B cell (primary cell): ENCODE measurements at regions of chr19 and their contacts with region 1.

Region 1: GRCh38 chr19:1445185-1445931 is 4.6 kb upstream of the APC2 start:
- DNase-seq: peak; percentile 86
- ATAC-seq: peak; percentile 94
- H3K4me3 ChIP-seq: peak overlapping the region in 4 of 5 experiments; percentile 36 to 69 (median 52)
- H3K4me3 Mint-ChIP-seq: peak overlapping the region; percentile 84
- H3K27ac ChIP-seq: no peak overlapping the region
- H3K27ac Mint-ChIP-seq: peak overlapping the region; percentile 20
- H3K4me1 ChIP-seq: peaks cover 19 to 29% of the 10 kb centered on the region in 2 donors
- H3K4me1 Mint-ChIP-seq: peaks cover 26% of the 10 kb centered on the region
- H3K27me3 ChIP-seq: peaks cover 0 to 42% (median 23%) of the 10 kb centered on the region in 4 experiments
- H3K27me3 Mint-ChIP-seq: peaks cover 24% of the 10 kb centered on the region
- CTCF ChIP-seq: peak; percentile 98

Region 2: DNA sequence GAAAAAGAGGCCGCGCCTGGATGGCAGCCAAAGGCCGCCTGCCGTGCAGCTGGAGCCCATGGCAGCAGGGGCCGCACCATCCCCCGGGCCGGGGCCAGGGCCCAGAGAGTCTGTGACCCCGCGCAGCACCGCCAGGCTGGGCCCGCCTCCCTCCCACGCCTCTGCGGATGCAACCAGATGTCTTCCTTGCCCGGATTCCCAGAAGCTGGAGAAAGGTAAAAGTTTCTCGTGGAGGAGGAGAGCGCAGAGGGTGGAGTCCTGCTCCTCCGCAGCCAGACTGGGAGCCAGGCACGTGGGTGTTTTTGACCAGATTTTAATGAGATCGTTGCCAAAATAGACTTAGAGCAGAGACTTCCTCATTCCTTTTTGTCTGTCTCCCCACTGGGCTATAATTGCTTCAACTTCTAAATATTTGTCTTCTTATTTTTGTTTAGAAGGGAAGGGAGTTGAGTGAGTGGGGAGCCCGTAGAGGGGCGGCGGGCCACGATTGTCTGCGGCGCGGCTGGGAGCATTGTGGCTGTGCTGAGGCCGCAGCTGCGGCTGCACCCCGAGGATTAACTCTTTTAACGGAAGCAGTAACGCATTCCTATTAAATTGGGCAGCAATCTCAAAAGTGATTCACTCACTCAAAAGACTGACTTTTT is 84.4 kb before region 1 on chr19:
- CTCF ChIA-PET with region 1: no interaction called
- POLR2A ChIA-PET with region 1: no interaction called
- intact Hi-C with region 1: no loop called
- DNase-seq: no peak
- ATAC-seq: no peak
- H3K4me3 ChIP-seq: no peak overlapping the region
- H3K4me3 Mint-ChIP-seq: no peak overlapping the region
- H3K27ac ChIP-seq: no peak overlapping the region
- H3K27ac Mint-ChIP-seq: no peak overlapping the region
- H3K4me1 ChIP-seq: peaks cover 21 to 25% of the 10 kb centered on the region in 2 donors
- H3K4me1 Mint-ChIP-seq: peaks cover 35% of the 10 kb centered on the region
- H3K27me3 ChIP-seq: no peaks in the 10 kb centered on the region
- H3K27me3 Mint-ChIP-seq: no peaks in the 10 kb centered on the region
- CTCF ChIP-seq: no peak

Region 3: GRCh38 chr19:1429750-1430149 is 15.6 kb before region 1 on chr19:
- CTCF ChIA-PET with region 1: no interaction called
- POLR2A ChIA-PET with region 1: interaction called, 13 read pairs
- intact Hi-C with region 1: no loop called
- DNase-seq: no peak
- ATAC-seq: no peak
- H3K4me3 ChIP-seq: no peak overlapping the region
- H3K4me3 Mint-ChIP-seq: no peak overlapping the region
- H3K27ac ChIP-seq: no peak overlapping the region
- H3K27ac Mint-ChIP-seq: no peak overlapping the region
- H3K4me1 ChIP-seq: no peaks in the 10 kb centered on the region
- H3K4me1 Mint-ChIP-seq: no peaks in the 10 kb centered on the region
- H3K27me3 ChIP-seq: no peaks in the 10 kb centered on the region
- H3K27me3 Mint-ChIP-seq: no peaks in the 10 kb centered on the region
- CTCF ChIP-seq: no peak

Region 4: GRCh38 chr19:1455336-1456120 is 10.2 kb after region 1 on chr19:
- CTCF ChIA-PET with region 1: interaction called, 11 read pairs
- POLR2A ChIA-PET with region 1: no interaction called
- intact Hi-C with region 1: no loop called
- DNase-seq: peak; percentile 68
- ATAC-seq: peak; percentile 67
- H3K4me3 ChIP-seq: peak overlapping the region in 3 of 5 experiments; percentile 12 to 29 (median 15)
- H3K4me3 Mint-ChIP-seq: peak overlapping the region; percentile 66
- H3K27ac ChIP-seq: no peak overlapping the region
- H3K27ac Mint-ChIP-seq: no peak overlapping the region
- H3K4me1 ChIP-seq: peaks cover 33 to 35% of the 10 kb centered on the region in 2 donors
- H3K4me1 Mint-ChIP-seq: peaks cover 21% of the 10 kb centered on the region
- H3K27me3 ChIP-seq: peaks cover 0 to 69% (median 41%) of the 10 kb centered on the region in 4 experiments
- H3K27me3 Mint-ChIP-seq: peaks cover 34% of the 10 kb centered on the region
- CTCF ChIP-seq: no peak

Region 5: GRCh38 chr19:1470203-1471009 is 25.0 kb after region 1 on chr19:
- CTCF ChIA-PET with region 1: interaction called, 11 read pairs
- POLR2A ChIA-PET with region 1: interaction called, 4 read pairs
- intact Hi-C with region 1: no loop called
- DNase-seq: peak; percentile 76
- ATAC-seq: peak; percentile 75
- H3K4me3 ChIP-seq: peak overlapping the region in 4 of 5 experiments; percentile 32 to 55 (median 53)
- H3K4me3 Mint-ChIP-seq: peak overlapping the region; percentile 80
- H3K27ac ChIP-seq: no peak overlapping the region
- H3K27ac Mint-ChIP-seq: peak overlapping the region; percentile 63
- H3K4me1 ChIP-seq: peaks cover 54 to 64% of the 10 kb centered on the region in 2 donors
- H3K4me1 Mint-ChIP-seq: peaks cover 20% of the 10 kb centered on the region
- H3K27me3 ChIP-seq: peaks cover 0 to 56% (median 18%) of the 10 kb centered on the region in 4 experiments
- H3K27me3 Mint-ChIP-seq: peaks cover 3% of the 10 kb centered on the region
- CTCF ChIP-seq: no peak

Region 6: DNA sequence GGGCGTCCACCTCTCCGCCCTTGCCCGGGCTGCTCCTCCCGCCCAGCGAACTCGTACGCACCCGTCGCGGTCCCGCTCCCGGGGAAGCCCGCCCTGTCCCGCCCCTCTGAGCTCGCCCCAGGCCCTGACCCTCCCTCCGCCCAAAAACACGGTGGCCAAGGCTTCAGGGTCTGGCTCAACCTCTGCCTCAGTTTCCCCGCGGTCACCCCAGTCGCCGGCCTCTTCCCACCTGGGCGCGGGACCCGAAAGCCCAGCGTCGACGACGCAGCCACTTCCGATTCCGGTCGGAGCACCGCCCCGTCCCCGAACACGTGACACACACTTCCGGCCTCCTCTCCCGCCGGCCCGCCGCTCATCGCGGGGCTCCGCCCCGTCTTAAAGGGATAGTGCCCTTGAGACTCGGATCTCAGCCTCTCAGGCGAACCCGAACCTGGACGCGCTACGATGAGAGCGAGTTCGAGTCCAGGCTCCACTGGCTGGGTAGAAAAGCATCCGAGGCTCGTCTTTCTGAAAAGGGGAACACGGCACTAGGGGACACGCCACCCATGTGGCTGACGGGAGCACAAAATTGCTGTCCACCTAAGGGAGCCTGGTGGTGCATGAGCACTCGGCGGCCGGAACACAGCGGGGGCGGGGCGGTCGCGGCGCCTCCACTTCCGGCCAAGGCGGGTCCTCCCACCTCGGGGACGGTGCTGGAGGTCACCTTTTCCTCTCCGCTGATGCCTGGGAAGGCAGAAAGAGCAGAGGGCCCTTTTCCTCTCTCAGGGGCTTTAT is 33.8 kb after region 1 on chr19 and contains the start of gene C19orf25:
- CTCF ChIA-PET with region 1: interaction called, 3 read pairs
- POLR2A ChIA-PET with region 1: no interaction called
- intact Hi-C with region 1: loop called (anchors 2 kb)
- DNase-seq: peak; percentile 94
- ATAC-seq: peak; percentile 94
- H3K4me3 ChIP-seq: peak within 1 kb of the TSS; percentile 50 to 92 (median 79)
- H3K4me3 Mint-ChIP-seq: peak within 1 kb of the TSS; percentile 97
- H3K27ac ChIP-seq: peak within 1 kb of the TSS; percentile 71 to 83
- H3K27ac Mint-ChIP-seq: peak within 1 kb of the TSS; percentile 93
- H3K4me1 ChIP-seq: peaks cover 6 to 22% of the 10 kb centered on the region in 2 donors
- H3K4me1 Mint-ChIP-seq: peaks cover 13% of the 10 kb centered on the region
- H3K27me3 ChIP-seq: no peaks in the 10 kb centered on the region
- H3K27me3 Mint-ChIP-seq: no peaks in the 10 kb centered on the region
- CTCF ChIP-seq: no peak
- total RNA-seq, gene C19orf25: 68.1 and 68.3 TPM in 2 replicates